ENCODE measurements at regions of chr20 and their contacts with region 1.

Region 1: GRCh38 chr20:38304845-38305447 is 990 bp downstream of the BPI start:
- DNase-seq: no peak
- ATAC-seq: peak in 1 of 8 donors; percentile 59
- H3K4me3 ChIP-seq: peak overlapping the region in 1 of 10 donors; percentile 9
- H3K27ac ChIP-seq: no peak overlapping the region
- H3K4me1 ChIP-seq: peaks cover 0 to 37% (median 0%) of the 10 kb centered on the region in 9 donors
- H3K27me3 ChIP-seq: peaks cover 0 to 54% (median 11%) of the 10 kb centered on the region in 7 donors
- CTCF ChIP-seq: peak in 7 of 9 donors; percentile 18 to 51 (median 35)

Region 2: DNA sequence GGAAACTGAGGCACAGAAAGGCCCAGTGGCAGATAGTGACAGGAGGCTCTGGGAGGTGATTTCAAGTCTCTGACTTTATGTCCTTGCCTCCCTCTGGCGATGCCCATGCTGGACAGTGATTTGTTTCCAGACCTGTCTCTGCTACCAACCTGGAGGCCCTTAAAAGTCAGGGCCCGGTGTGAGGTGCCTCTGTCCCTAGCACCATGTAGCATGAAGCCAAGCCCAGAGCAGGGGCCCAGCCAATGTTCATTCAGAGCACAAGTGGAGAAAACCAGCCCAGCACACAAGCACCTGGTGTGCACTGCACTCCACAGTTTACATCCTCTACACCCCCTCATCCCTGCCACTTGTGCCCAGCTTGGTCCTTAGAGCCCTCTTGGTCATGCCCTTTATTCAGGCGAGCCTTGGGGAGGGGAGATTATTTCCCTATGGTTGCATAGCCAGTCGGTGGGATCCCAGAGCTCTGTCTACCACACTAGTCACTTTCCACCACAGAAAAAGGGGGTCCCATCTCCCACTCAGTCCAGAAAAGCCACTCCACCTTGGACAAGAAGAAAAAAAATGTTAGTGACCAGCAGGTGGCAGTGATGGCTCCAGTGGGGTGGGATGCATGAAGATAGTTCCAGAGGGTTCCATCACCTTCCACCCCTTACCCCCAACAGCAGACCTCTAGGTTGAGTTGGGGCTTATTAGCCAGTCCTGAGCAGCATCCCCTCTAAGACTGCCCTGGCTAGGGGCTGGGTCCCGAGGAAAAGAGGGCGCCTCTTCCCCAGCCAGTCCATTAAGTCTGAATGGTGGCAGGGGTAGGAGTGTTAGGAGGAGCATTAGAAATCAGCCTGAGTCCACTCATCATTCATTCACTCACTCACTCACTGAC is 75.3 kb before region 1 on chr20:
- intact Hi-C with region 1: loop called in 3 of 10 experiments (anchors 5 to 10 kb)
- DNase-seq: no peak
- ATAC-seq: peak in 5 of 8 donors; percentile 2 to 33 (median 17)
- H3K4me3 ChIP-seq: no peak overlapping the region
- H3K27ac ChIP-seq: no peak overlapping the region
- H3K4me1 ChIP-seq: peaks cover 0 to 14% (median 9%) of the 10 kb centered on the region in 9 donors
- H3K27me3 ChIP-seq: peaks cover 0 to 5% (median 0%) of the 10 kb centered on the region in 7 donors
- CTCF ChIP-seq: peak; percentile 16 to 65 (median 51)

Region 3: DNA sequence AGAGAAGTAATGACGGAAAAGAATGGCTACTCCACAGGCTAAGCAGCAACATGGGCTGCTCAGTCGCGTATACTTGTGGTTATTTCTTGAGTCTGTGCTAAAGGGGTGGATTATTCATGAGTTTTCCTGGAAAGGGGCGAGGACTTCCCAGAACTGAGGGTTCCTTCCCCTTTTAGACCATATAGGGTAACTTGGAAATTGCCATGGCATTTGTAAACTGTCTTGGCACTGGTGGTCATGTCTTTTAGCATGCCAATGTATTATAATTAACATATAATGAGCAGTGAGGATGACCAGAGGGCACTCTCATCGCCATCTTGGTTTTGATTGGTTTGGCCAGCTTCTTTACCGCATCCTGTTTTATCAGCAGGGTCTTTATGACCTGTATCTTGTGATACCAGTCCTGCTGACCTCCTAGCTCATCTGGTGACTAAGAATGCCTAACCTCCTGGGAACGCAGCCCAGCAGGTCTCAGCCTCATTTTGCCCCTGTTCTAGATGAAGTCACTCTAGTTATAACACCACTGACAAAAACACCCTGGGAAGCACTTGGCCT is 52.8 kb after region 1 on chr20:
- intact Hi-C with region 1: no loop called
- DNase-seq: no peak
- ATAC-seq: no peak
- H3K4me3 ChIP-seq: no peak overlapping the region
- H3K27ac ChIP-seq: no peak overlapping the region
- H3K4me1 ChIP-seq: peaks cover 0 to 13% (median 0%) of the 10 kb centered on the region in 9 donors
- H3K27me3 ChIP-seq: no peaks in the 10 kb centered on the region
- CTCF ChIP-seq: no peak

Measured in heart right ventricle (tissue), 16 donors.